Breast epithelium (tissue), 4 donors: ENCODE measurements at regions of chr11 and their contacts with region 1.

Region 1: GRCh38 chr11:88583251-88583650 is 245.7 kb upstream of the CTSC start:
- DNase-seq: no peak
- H3K4me3 ChIP-seq: no peak overlapping the region
- H3K27ac ChIP-seq: no peak overlapping the region
- H3K4me1 ChIP-seq: no peaks in the 10 kb centered on the region
- H3K27me3 ChIP-seq: no peaks in the 10 kb centered on the region
- CTCF ChIP-seq: no peak
- POLR2A ChIP-seq: no peak

Region 2: GRCh38 chr11:87600938-87601337 is 982.3 kb before region 1 on chr11:
- intact Hi-C with region 1: loop called (anchors 10 kb)
- DNase-seq: no peak
- H3K4me3 ChIP-seq: no peak overlapping the region
- H3K27ac ChIP-seq: no peak overlapping the region
- H3K4me1 ChIP-seq: no peaks in the 10 kb centered on the region
- H3K27me3 ChIP-seq: no peaks in the 10 kb centered on the region
- CTCF ChIP-seq: no peak
- POLR2A ChIP-seq: no peak

Region 3: DNA sequence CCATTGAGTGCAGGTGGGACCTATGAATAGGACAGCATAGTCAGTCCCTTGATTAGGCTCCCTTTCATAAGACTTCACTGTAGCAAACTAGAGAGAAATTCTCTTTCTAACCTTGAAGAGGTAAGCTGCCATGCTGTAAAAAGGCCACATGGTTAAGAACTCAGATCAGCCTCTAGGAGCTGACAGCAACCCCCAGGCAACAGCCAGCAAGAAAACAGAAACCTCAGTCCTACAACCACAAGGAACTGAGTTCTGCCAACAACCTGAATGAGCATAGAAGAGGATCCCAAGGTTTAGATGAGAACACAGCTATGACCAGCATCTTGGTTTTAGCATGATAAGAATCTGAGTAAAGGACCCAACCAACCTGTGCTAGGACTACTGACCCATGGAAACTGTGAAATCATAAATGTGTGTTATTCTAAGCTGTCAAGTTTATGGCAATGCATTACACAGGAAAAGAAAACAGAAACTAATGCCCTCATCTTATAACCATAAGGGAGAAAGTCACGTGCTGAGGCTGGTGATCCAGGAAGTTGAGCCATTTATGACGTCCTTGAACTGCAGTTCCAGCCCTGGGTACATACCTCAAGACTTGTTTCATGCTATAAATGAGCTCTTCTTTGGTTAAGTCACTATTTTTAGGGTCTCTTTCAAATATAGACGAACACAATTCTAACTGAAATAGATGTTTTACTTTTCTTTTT is 451.3 kb before region 1 on chr11:
- intact Hi-C with region 1: no loop called
- DNase-seq: no peak
- H3K4me3 ChIP-seq: no peak overlapping the region
- H3K27ac ChIP-seq: no peak overlapping the region
- H3K4me1 ChIP-seq: no peaks in the 10 kb centered on the region
- H3K27me3 ChIP-seq: no peaks in the 10 kb centered on the region
- CTCF ChIP-seq: no peak
- POLR2A ChIP-seq: no peak

Region 4: GRCh38 chr11:88631497-88631896 is 48.2 kb after region 1 on chr11:
- intact Hi-C with region 1: no loop called
- DNase-seq: no peak
- H3K4me3 ChIP-seq: no peak overlapping the region
- H3K27ac ChIP-seq: no peak overlapping the region
- H3K4me1 ChIP-seq: no peaks in the 10 kb centered on the region
- H3K27me3 ChIP-seq: no peaks in the 10 kb centered on the region
- CTCF ChIP-seq: no peak
- POLR2A ChIP-seq: no peak